Naive thymus-derived CD4-positive, alpha-beta T cell (primary cell): ENCODE measurements at regions of chr9 and their contacts with region 1.

Region 1: GRCh38 chr9:15552636-15553527 is at the start of gene CCDC171:
- DNase-seq: peak; percentile 80 to 89 (median 85)
- ATAC-seq: peak; percentile 92
- H3K4me3 ChIP-seq: peak within 1 kb of the TSS; percentile 65
- H3K4me3 Mint-ChIP-seq: peak within 1 kb of the TSS; percentile 88 to 97 (median 94)
- H3K27ac ChIP-seq: peak within 1 kb of the TSS; percentile 66
- H3K27ac Mint-ChIP-seq: peak within 1 kb of the TSS; percentile 73 to 93 (median 86)
- H3K4me1 ChIP-seq: peaks cover 0 to 11% of the 10 kb centered on the region in 2 donors
- H3K4me1 Mint-ChIP-seq: peaks cover 0 to 23% (median 12%) of the 10 kb centered on the region in 7 donors
- H3K27me3 ChIP-seq: no peaks in the 10 kb centered on the region
- H3K27me3 Mint-ChIP-seq: peaks cover 0 to 39% (median 0%) of the 10 kb centered on the region in 5 donors
- total RNA-seq, gene CCDC171: 0.77 to 3.7 (median 2.7) TPM

Region 2: GRCh38 chr9:14993061-14993800 is 559.7 kb before region 1 on chr9:
- CTCF ChIA-PET with region 1: no interaction called
- POLR2A ChIA-PET with region 1: no interaction called
- intact Hi-C with region 1: loop called in 1 of 2 experiments (anchors 2 kb)
- DNase-seq: peak; percentile 9 to 50 (median 27)
- ATAC-seq: peak; percentile 45
- H3K4me3 ChIP-seq: peak overlapping the region; percentile 70
- H3K4me3 Mint-ChIP-seq: peak overlapping the region; percentile 79 to 92 (median 86)
- H3K27ac ChIP-seq: peak overlapping the region; percentile 61
- H3K27ac Mint-ChIP-seq: peak overlapping the region; percentile 75 to 94 (median 84)
- H3K4me1 ChIP-seq: peaks cover 14 to 18% of the 10 kb centered on the region in 2 donors
- H3K4me1 Mint-ChIP-seq: peaks cover 31 to 44% (median 40%) of the 10 kb centered on the region in 7 donors
- H3K27me3 ChIP-seq: no peaks in the 10 kb centered on the region
- H3K27me3 Mint-ChIP-seq: peaks cover 0 to 3% (median 0%) of the 10 kb centered on the region in 5 donors

Region 3: GRCh38 chr9:15306757-15307534 is 245.9 kb before region 1 on chr9 and contains the start of gene TTC39B:
- CTCF ChIA-PET with region 1: no interaction called
- POLR2A ChIA-PET with region 1: no interaction called
- intact Hi-C with region 1: loop called in 1 of 2 experiments (anchors 2 kb)
- DNase-seq: peak; percentile 34 to 88 (median 53)
- ATAC-seq: peak; percentile 87
- H3K4me3 ChIP-seq: peak within 1 kb of the TSS; percentile 86
- H3K4me3 Mint-ChIP-seq: peak within 1 kb of the TSS; percentile 89 to 99 (median 97)
- H3K27ac ChIP-seq: peak within 1 kb of the TSS; percentile 81
- H3K27ac Mint-ChIP-seq: peak within 1 kb of the TSS; percentile 84 to 97 (median 95)
- H3K4me1 ChIP-seq: peaks cover 25 to 44% of the 10 kb centered on the region in 2 donors
- H3K4me1 Mint-ChIP-seq: peaks cover 37 to 66% (median 61%) of the 10 kb centered on the region in 7 donors
- H3K27me3 ChIP-seq: no peaks in the 10 kb centered on the region
- H3K27me3 Mint-ChIP-seq: no peaks in the 10 kb centered on the region
- total RNA-seq, gene TTC39B: 29.1 to 49.3 (median 42.8) TPM

Region 4: DNA sequence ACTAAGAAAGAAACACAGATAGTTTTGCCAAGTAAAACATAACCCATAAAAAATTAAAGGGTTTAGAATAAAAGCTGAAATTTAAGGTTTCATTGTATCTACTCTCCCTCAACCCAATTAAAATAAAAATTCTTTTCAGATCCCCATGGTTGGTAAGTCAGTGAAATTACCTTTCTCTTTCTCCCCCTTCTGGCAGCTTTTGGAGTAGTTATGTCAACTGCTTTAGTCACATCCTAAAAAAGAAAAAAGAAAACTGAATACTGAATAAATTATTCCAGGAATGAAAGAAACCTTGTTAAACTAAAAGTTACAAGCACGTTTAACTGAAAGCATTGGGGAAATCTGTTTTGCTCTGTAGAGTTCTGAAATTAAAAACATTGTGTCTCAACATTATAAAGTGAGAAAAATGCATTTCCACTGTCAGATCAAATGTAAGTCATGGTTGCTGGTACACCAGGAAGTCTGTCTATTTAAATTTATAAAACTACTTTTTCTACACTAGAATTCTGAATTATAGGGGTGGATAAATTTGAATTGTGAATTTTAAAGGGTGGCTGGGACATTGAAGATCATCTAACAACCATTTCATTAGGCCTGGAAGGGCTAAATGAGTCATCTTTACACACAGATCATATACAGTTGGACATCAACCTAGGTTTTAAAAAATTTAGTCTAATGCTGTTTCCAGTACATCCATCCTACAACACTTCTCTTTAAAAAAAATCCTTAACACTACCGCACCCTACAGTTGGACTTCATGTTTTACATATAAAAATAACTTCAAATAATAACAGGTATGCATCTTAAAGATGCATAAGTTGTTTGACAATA is 66.8 kb before region 1 on chr9:
- CTCF ChIA-PET with region 1: interaction called, 3 read pairs
- POLR2A ChIA-PET with region 1: no interaction called
- intact Hi-C with region 1: loop called in 1 of 2 experiments (anchors 5 kb)
- DNase-seq: peak in 5 of 9 donors; percentile 27 to 41 (median 31)
- ATAC-seq: peak; percentile 45
- H3K4me3 ChIP-seq: no peak overlapping the region
- H3K4me3 Mint-ChIP-seq: no peak overlapping the region
- H3K27ac ChIP-seq: no peak overlapping the region
- H3K27ac Mint-ChIP-seq: peak overlapping the region in 8 of 9 donors; percentile 10 to 63 (median 42)
- H3K4me1 ChIP-seq: peaks cover 6 to 9% of the 10 kb centered on the region in 2 donors
- H3K4me1 Mint-ChIP-seq: peaks cover 19 to 57% (median 47%) of the 10 kb centered on the region in 7 donors
- H3K27me3 ChIP-seq: no peaks in the 10 kb centered on the region
- H3K27me3 Mint-ChIP-seq: no peaks in the 10 kb centered on the region